ENCODE measurements at regions of chr17 and their contacts with region 1.

Region 1: GRCh38 chr17:76278952-76279741 is 14.0 kb downstream of the UBALD2 start:
- DNase-seq: peak; percentile 47 to 83
- H3K4me3 ChIP-seq: no peak overlapping the region
- H3K27ac ChIP-seq: no peak overlapping the region
- H3K4me1 ChIP-seq: peaks cover 15% of the 10 kb centered on the region
- H3K27me3 ChIP-seq: no peaks in the 10 kb centered on the region
- CTCF ChIP-seq: peak; percentile 94

Region 2: GRCh38 chr17:76014184-76014924 is 264.8 kb before region 1 on chr17:
- CTCF ChIA-PET with region 1: no interaction called
- POLR2A ChIA-PET with region 1: no interaction called
- intact Hi-C with region 1: loop called (anchors 5 kb)
- DNase-seq: peak in 1 of 2 experiments; percentile 69
- H3K4me3 ChIP-seq: no peak overlapping the region
- H3K27ac ChIP-seq: no peak overlapping the region
- H3K4me1 ChIP-seq: no peaks in the 10 kb centered on the region
- H3K27me3 ChIP-seq: no peaks in the 10 kb centered on the region
- CTCF ChIP-seq: peak; percentile 94

Region 3: GRCh38 chr17:76182016-76182764 is 97.0 kb before region 1 on chr17:
- CTCF ChIA-PET with region 1: interaction called, 5 read pairs
- POLR2A ChIA-PET with region 1: no interaction called
- intact Hi-C with region 1: loop called (anchors 5 kb)
- DNase-seq: peak; percentile 67 to 85
- H3K4me3 ChIP-seq: no peak overlapping the region
- H3K27ac ChIP-seq: no peak overlapping the region
- H3K4me1 ChIP-seq: 0 out of 2 replicates have a peak, but pooled peaks cover 5% of the 10 kb centered on the region
- H3K27me3 ChIP-seq: no peaks in the 10 kb centered on the region
- CTCF ChIP-seq: peak; percentile 83

Region 4: DNA sequence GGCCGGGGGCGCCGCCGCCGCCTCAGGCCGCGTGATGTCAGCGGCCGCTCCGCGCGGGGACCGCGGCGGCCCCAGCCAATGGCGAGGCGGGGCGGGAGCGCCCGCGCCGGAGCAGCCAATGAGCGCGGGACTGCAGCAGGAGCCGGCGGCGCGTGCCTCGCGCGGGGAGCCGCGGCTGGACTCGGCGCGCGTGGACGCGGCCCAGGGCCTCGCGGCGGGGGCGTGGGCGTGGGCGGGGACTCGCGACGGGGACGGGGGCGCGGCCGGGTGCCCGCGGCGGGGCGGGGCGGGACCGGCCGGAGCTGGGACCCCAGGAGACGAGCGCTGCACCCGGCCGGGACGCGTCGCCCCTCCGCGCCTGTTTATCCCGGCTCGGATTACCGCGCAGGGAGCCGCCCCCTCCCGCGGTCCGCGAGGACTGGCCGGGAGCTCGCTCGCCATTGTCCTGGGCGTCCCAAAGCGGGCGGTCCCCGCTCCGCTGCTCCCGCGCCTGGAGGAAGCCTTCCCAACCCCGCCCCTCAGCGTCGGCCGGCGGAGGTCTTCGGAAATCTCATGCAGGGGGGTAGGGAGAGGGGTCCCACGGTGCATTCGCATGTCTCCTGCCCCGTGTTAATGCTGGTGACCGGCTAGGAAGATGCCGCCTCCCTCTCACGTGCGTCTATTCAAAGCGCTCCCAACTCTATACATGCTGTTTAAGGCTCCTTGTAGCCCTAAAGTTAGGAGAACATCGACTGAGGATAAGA is 38.5 kb before region 1 on chr17 and contains the start of gene RNF157:
- CTCF ChIA-PET with region 1: interaction called, 18 read pairs
- POLR2A ChIA-PET with region 1: no interaction called
- intact Hi-C with region 1: no loop called
- DNase-seq: peak in 1 of 2 experiments; percentile 65
- H3K4me3 ChIP-seq: peak within 1 kb of the TSS; percentile 85
- H3K27ac ChIP-seq: no peak within 1 kb of the TSS
- H3K4me1 ChIP-seq: peaks cover 12% of the 10 kb centered on the region
- H3K27me3 ChIP-seq: no peaks in the 10 kb centered on the region
- CTCF ChIP-seq: no peak
- total RNA-seq, gene RNF157: 5.7 and 7.2 TPM in 2 replicates

Region 5: GRCh38 chr17:76370261-76370993 is 91.3 kb after region 1 on chr17:
- CTCF ChIA-PET with region 1: no interaction called
- POLR2A ChIA-PET with region 1: no interaction called
- intact Hi-C with region 1: no loop called
- DNase-seq: peak; percentile 66 to 80
- H3K4me3 ChIP-seq: no peak overlapping the region
- H3K27ac ChIP-seq: no peak overlapping the region
- H3K4me1 ChIP-seq: no peaks in the 10 kb centered on the region
- H3K27me3 ChIP-seq: no peaks in the 10 kb centered on the region
- CTCF ChIP-seq: peak; percentile 59; the same call in 1 of the 2 replicates